PC-3 (cell line): ENCODE measurements at regions of chr2 and their contacts with region 1.

Region 1: GRCh38 chr2:208254871-208255556 is at the start of gene IDH1:
- DNase-seq: peak; percentile 97
- ATAC-seq: peak; percentile 76
- H3K4me3 ChIP-seq: peak within 1 kb of the TSS; percentile 99
- H3K27ac ChIP-seq: peak within 1 kb of the TSS; percentile 61
- H3K4me1 ChIP-seq: peaks cover 24% of the 10 kb centered on the region
- H3K27me3 ChIP-seq: no peaks in the 10 kb centered on the region
- CTCF ChIP-seq: peak; percentile 73
- total RNA-seq, gene IDH1: 71.5 and 73.6 TPM in 2 replicates

Region 2: GRCh38 chr2:208101716-208102631 is 153.0 kb before region 1 on chr2:
- CTCF ChIA-PET with region 1: interaction called, 11 read pairs
- POLR2A ChIA-PET with region 1: no interaction called
- intact Hi-C with region 1: loop called (anchors 1 kb)
- DNase-seq: peak; percentile 70
- ATAC-seq: peak; percentile 87
- H3K4me3 ChIP-seq: no peak overlapping the region
- H3K27ac ChIP-seq: no peak overlapping the region
- H3K4me1 ChIP-seq: 0 out of 2 replicates have a peak, but pooled peaks cover 5% of the 10 kb centered on the region
- H3K27me3 ChIP-seq: no peaks in the 10 kb centered on the region
- CTCF ChIP-seq: peak; percentile 84

Region 3: GRCh38 chr2:208175069-208175839 is 79.8 kb before region 1 on chr2:
- CTCF ChIA-PET with region 1: interaction called, 24 read pairs
- POLR2A ChIA-PET with region 1: no interaction called
- intact Hi-C with region 1: loop called (anchors 1 kb)
- DNase-seq: peak; percentile 92
- ATAC-seq: peak; percentile 100
- H3K4me3 ChIP-seq: peak overlapping the region; percentile 44; the same call in 1 of the 2 replicates
- H3K27ac ChIP-seq: no peak overlapping the region
- H3K4me1 ChIP-seq: 0 out of 2 replicates have a peak, but pooled peaks cover 3% of the 10 kb centered on the region
- H3K27me3 ChIP-seq: peaks cover 4% of the 10 kb centered on the region; the same call in 1 of the 2 replicates
- CTCF ChIP-seq: peak; percentile 89

Region 4: GRCh38 chr2:208210688-208211451 is 44.1 kb before region 1 on chr2:
- CTCF ChIA-PET with region 1: no interaction called
- POLR2A ChIA-PET with region 1: no interaction called
- intact Hi-C with region 1: no loop called
- DNase-seq: no peak
- ATAC-seq: no peak
- H3K4me3 ChIP-seq: no peak overlapping the region
- H3K27ac ChIP-seq: no peak overlapping the region
- H3K4me1 ChIP-seq: no peaks in the 10 kb centered on the region
- H3K27me3 ChIP-seq: no peaks in the 10 kb centered on the region
- CTCF ChIP-seq: no peak

Region 5: DNA sequence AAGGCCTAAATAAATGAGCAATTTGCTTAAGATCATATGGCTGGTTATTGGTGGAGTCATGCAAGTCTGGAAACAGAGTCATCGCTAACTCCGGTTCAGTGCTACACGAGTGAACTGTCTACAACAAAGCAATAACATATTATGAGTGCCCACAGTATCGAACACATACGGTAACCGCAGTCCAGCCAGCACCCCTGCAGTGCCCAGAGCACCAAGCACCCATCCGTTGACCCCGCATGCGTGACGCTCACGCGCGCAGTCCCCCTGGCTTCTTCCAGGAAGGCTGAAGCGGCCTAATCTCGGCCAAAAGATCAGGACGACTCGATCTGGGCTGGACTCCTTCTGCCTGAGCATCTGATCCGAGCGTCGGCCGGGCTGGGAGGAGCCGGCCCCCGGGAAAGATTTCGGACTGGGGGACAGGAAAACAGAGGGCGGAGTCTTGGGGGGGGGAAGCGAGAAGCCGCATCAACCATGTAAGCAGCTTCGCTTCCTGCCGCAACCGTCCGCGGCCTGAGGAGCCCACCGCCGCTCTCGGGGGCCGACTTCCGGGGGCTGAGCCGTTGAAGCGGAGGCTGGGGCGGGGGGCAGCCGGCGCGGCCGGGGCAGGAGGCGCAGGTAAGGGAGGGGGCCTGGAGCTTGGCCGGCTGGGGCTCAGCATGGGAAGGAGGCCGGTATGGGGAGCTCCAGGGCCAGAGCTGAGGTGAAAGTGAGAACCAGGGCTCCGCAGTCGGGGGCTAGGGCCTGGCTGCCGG is 11.0 kb after region 1 on chr2 and contains the start of gene PIKFYVE:
- CTCF ChIA-PET with region 1: interaction called, 6 read pairs
- POLR2A ChIA-PET with region 1: no interaction called
- intact Hi-C with region 1: loop called (anchors 1 kb)
- DNase-seq: peak; percentile 97
- ATAC-seq: peak; percentile 90
- H3K4me3 ChIP-seq: peak within 1 kb of the TSS; percentile 98
- H3K27ac ChIP-seq: peak within 1 kb of the TSS; percentile 50
- H3K4me1 ChIP-seq: peaks cover 23% of the 10 kb centered on the region
- H3K27me3 ChIP-seq: no peaks in the 10 kb centered on the region
- CTCF ChIP-seq: no peak
- total RNA-seq, gene PIKFYVE: 18.8 and 19.4 TPM in 2 replicates